ENCODE measurements at regions of chrX and their contacts with region 1.

Region 1: GRCh38 chrX:73668779-73669178 is 105.8 kb downstream of the CHIC1 start:
- DNase-seq: no peak

Region 2: GRCh38 chrX:73758250-73758649 is 89.5 kb after region 1 on chrX:
- in situ Hi-C with region 1: loop called (anchors 25 kb)
- DNase-seq: no peak

Region 3: DNA sequence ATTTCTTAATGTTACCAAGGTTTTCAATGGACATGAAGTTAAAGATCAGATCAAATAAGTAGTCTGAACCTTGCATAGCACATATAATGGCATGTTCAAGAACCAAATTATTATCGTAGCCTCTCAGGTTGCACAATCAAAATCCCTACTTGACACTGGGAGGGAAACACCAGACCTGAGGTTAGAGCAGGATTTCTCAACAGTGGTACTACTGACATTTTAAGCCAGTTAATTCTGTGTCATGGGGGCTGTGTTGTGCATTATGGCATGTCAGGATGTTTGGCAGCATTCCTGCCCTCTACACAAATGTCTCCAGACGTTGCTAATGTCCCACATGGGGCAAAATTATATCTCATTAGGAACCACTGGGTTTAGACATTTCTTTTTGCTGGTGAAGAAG is 924.8 kb after region 1 on chrX:
- in situ Hi-C with region 1: no loop called
- DNase-seq: no peak